Activated CD8-positive, alpha-beta T cell treated with anti-CD3 and anti-CD28 coated beads, Interleukin-2, amount 10 ng/mL, durations not matched to agents 7 days and 5 days (primary cell): ENCODE measurements at regions of chr1 and their contacts with region 1.

Region 1: GRCh38 chr1:212291505-212292134 is 6.4 kb downstream of the PPP2R5A start:
- DNase-seq: peak; percentile 37
- ATAC-seq: peak; percentile 77
- H3K4me3 Mint-ChIP-seq: no peak overlapping the region
- H3K27ac Mint-ChIP-seq: no peak overlapping the region
- H3K4me1 Mint-ChIP-seq: peaks cover 69% of the 10 kb centered on the region
- H3K27me3 Mint-ChIP-seq: no peaks in the 10 kb centered on the region

Region 2: GRCh38 chr1:212078826-212079225 is 212.8 kb before region 1 on chr1:
- CTCF ChIA-PET with region 1: interaction called, 45 read pairs
- POLR2A ChIA-PET with region 1: no interaction called
- DNase-seq: no peak
- ATAC-seq: no peak
- H3K4me3 Mint-ChIP-seq: no peak overlapping the region
- H3K27ac Mint-ChIP-seq: no peak overlapping the region
- H3K4me1 Mint-ChIP-seq: no peaks in the 10 kb centered on the region
- H3K27me3 Mint-ChIP-seq: no peaks in the 10 kb centered on the region

Region 3: DNA sequence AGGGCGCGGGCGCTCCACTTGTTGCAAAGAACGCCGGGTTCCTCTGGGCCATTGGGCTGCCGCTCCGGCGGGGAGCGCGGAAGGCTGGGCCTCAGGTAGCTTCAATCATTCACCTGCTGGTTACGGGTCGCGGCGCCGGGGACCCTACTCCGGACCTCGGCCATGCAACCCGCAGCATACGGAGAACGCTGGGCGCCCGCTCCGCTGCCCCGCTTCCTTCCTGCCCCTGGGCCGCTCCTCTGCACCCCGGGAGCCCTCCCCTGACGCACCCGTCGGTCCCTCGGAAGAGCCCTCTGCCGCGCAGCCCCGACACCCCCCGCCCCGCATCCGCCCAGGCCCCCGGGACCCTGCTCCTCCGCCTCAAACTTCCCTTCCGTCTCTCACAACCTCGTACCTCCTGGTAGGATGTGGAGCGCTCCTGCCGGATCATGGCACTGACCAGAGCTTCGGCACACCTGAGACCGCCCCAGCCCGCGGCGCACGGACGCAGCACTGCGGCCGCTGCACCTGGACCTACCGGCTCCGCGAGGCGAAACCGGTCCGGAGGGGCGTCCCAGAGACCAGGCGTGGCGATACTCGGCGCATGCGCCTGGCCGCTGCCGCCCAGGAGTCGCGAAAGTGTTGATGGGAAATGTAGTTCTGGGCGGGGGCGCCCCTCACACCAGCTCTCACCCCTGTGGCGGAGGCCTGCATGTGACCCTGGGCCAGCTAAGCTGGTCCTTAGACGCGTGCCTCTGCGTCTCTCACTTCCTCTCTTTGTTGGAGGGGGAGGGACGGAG is 122.9 kb after region 1 on chr1 and contains the start of gene PACC1:
- CTCF ChIA-PET with region 1: no interaction called
- POLR2A ChIA-PET with region 1: no interaction called
- DNase-seq: peak; percentile 94
- ATAC-seq: peak; percentile 97
- H3K4me3 Mint-ChIP-seq: peak within 1 kb of the TSS; percentile 98
- H3K27ac Mint-ChIP-seq: peak within 1 kb of the TSS; percentile 94
- H3K4me1 Mint-ChIP-seq: peaks cover 36% of the 10 kb centered on the region
- H3K27me3 Mint-ChIP-seq: no peaks in the 10 kb centered on the region
- total RNA-seq, gene PACC1: 10.0 to 13.2 TPM